A549 (cell line): ENCODE measurements at regions of chr11 and their contacts with region 1.

Region 1: DNA sequence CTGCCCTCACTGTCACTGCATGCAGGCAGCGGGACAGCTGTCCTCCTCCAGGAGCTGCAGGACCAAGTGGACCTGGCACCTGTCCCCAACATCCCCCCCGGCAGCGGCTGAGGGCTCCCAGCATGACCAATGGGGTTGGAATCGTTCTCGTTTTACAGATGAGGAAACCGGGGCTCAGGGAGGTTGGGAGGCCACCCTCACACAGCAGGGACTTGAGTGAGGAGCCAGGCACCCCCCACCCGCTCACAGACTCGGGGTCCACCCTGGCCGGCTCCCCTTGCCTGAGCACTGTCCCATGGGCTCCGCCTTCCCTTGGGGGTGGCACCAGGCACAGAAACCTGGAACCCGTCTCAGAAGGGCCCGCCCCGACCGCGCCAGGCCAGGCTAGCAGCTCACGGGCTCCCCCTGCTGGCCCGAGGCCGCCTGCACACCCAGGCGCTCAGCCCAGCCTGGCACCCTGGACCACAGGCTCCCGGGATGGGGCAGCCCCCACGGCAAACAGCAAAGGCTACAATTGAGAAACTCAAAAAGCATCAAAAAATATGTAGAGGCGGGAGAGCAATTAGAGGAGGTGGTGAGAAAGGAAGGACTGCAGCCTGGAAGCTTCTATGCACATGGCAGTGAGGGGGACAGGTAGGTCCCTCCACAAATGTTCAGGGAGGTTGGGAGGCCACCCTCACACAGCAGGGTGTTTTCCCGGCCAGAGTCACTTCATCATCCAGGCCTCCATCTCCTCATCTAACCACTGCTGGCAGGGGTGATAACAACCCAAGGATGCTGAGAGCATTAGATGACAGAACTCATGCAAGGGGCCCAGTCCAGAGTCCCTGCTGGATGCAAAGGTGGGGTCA is 12.8 kb downstream of the MACROD1 start:
- DNase-seq: peak; percentile 45 to 94
- ATAC-seq: peak; percentile 81 to 95
- H3K4me3 ChIP-seq: no peak overlapping the region
- H3K27ac ChIP-seq: no peak overlapping the region
- H3K4me1 ChIP-seq: no peaks in the 10 kb centered on the region
- CTCF ChIP-seq: peak; percentile 93
- EP300 ChIP-seq: no peak
- POLR2A ChIP-seq: no peak
- RAD21 ChIP-seq: peak; percentile 72 to 79

Region 2: GRCh38 chr11:64000026-64000739 is 152.9 kb before region 1 on chr11:
- CTCF ChIA-PET with region 1: interaction called, 46 read pairs
- POLR2A ChIA-PET with region 1: no interaction called
- DNase-seq: no peak
- ATAC-seq: no peak
- H3K4me3 ChIP-seq: no peak overlapping the region
- H3K27ac ChIP-seq: no peak overlapping the region
- H3K4me1 ChIP-seq: peaks cover 16% of the 10 kb centered on the region
- CTCF ChIP-seq: peak; percentile 31; the same call in 2 of the 3 replicates
- EP300 ChIP-seq: no peak
- POLR2A ChIP-seq: no peak
- RAD21 ChIP-seq: no peak

Region 3: GRCh38 chr11:64015935-64016845 is 136.9 kb before region 1 on chr11:
- CTCF ChIA-PET with region 1: interaction called, 17 read pairs
- POLR2A ChIA-PET with region 1: no interaction called
- DNase-seq: no peak
- ATAC-seq: no peak; a peak in 2 of 6 replicates
- H3K4me3 ChIP-seq: no peak overlapping the region
- H3K27ac ChIP-seq: no peak overlapping the region
- H3K4me1 ChIP-seq: peaks cover 12% of the 10 kb centered on the region; the same call in 2 of the 3 replicates
- CTCF ChIP-seq: no peak
- EP300 ChIP-seq: no peak
- POLR2A ChIP-seq: no peak
- RAD21 ChIP-seq: no peak

Region 4: GRCh38 chr11:64036087-64037026 is 116.7 kb before region 1 on chr11:
- CTCF ChIA-PET with region 1: interaction called, 174 read pairs
- POLR2A ChIA-PET with region 1: no interaction called
- DNase-seq: no peak
- ATAC-seq: peak; percentile 41 to 56; a peak in 4 of 6 replicates
- H3K4me3 ChIP-seq: peak overlapping the region; percentile 66
- H3K27ac ChIP-seq: peak overlapping the region; percentile 50 to 78; a peak in 5 of 6 replicates
- H3K4me1 ChIP-seq: peaks cover 19% of the 10 kb centered on the region
- CTCF ChIP-seq: 0 out of 3 replicates have a peak, but pooled peaks have one; percentile 10
- EP300 ChIP-seq: no peak
- POLR2A ChIP-seq: no peak
- RAD21 ChIP-seq: no peak

Region 5: GRCh38 chr11:64094463-64095260 is 58.4 kb before region 1 on chr11:
- CTCF ChIA-PET with region 1: interaction called, 17 read pairs
- POLR2A ChIA-PET with region 1: no interaction called
- DNase-seq: peak; percentile 84 to 94
- ATAC-seq: peak; percentile 87 to 90
- H3K4me3 ChIP-seq: no peak overlapping the region
- H3K27ac ChIP-seq: peak overlapping the region; percentile 53 to 95
- H3K4me1 ChIP-seq: peaks cover 54% of the 10 kb centered on the region
- CTCF ChIP-seq: no peak
- EP300 ChIP-seq: no peak
- POLR2A ChIP-seq: no peak
- RAD21 ChIP-seq: no peak

Region 6: GRCh38 chr11:64124147-64124546 is 28.9 kb before region 1 on chr11:
- CTCF ChIA-PET with region 1: interaction called, 180 read pairs
- POLR2A ChIA-PET with region 1: no interaction called
- DNase-seq: peak in 1 of 2 experiments; percentile 36
- ATAC-seq: peak in 1 of 2 experiments; percentile 48; a peak in 2 of 6 replicates
- H3K4me3 ChIP-seq: no peak overlapping the region
- H3K27ac ChIP-seq: no peak overlapping the region
- H3K4me1 ChIP-seq: no peaks in the 10 kb centered on the region
- CTCF ChIP-seq: no peak
- EP300 ChIP-seq: no peak
- POLR2A ChIP-seq: no peak
- RAD21 ChIP-seq: no peak

Region 7: DNA sequence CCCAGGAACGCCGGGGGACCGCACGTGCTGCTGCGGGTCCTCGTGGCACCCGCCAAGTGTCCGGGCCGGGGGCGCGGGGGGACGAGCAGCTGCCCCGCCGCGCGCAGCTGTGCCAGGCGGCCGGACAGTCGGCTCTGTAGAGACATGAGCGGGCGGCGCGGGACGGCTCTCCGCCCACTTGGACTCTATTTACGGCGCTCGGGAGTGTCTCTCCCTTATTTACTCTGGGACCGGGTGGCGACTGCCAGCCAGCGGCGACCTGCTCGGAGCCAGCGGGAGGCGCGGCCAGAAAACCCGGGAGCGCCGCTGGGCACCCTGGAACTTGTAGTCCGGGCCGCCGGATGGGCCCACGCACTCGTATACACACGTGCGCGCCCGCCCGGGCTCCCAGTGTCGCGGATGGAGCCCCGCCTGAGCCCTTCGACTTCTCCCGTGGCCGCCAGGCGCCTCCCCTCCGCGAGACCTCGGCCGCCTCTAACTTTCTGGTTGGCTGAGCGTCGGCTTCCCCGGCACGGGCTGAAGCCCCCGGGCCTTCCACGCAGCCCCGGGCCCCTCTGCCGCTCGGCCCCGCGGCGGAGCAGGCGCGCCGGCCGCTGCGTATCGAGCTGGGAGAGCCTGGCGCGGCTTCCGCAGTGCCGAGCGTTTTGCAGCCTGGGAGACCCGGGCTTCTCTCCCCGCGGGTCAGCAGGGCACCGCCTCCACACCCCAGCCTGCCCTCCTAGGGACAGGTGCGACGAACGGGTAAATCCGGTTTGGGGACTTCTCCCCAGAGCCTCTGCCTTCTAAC is 13.0 kb after region 1 on chr11 and contains the start of gene MACROD1:
- CTCF ChIA-PET with region 1: interaction called, 68 read pairs
- POLR2A ChIA-PET with region 1: interaction called, 3 read pairs
- DNase-seq: peak; percentile 79 to 91
- ATAC-seq: peak; percentile 91 to 95
- H3K4me3 ChIP-seq: peak within 1 kb of the TSS; percentile 81
- H3K27ac ChIP-seq: peak within 1 kb of the TSS; percentile 85 to 98
- H3K4me1 ChIP-seq: peaks cover 14% of the 10 kb centered on the region
- CTCF ChIP-seq: no peak; the same call in 2 of the 3 replicates
- EP300 ChIP-seq: no peak
- POLR2A ChIP-seq: peak; percentile 45
- RAD21 ChIP-seq: no peak
- polyA plus RNA-seq, gene MACROD1: 10.0 and 16.6 TPM in 2 replicates

Region 8: GRCh38 chr11:64216879-64217278 is 63.8 kb after region 1 on chr11:
- CTCF ChIA-PET with region 1: no interaction called
- POLR2A ChIA-PET with region 1: no interaction called
- DNase-seq: no peak
- ATAC-seq: peak; percentile 29 to 30; a peak in 3 of 6 replicates
- H3K4me3 ChIP-seq: no peak overlapping the region
- H3K27ac ChIP-seq: no peak overlapping the region
- H3K4me1 ChIP-seq: no peaks in the 10 kb centered on the region
- CTCF ChIP-seq: no peak
- EP300 ChIP-seq: no peak
- POLR2A ChIP-seq: no peak
- RAD21 ChIP-seq: no peak